Mammary epithelial cell (primary cell): ENCODE measurements at regions of chr2 and their contacts with region 1.

Region 1: DNA sequence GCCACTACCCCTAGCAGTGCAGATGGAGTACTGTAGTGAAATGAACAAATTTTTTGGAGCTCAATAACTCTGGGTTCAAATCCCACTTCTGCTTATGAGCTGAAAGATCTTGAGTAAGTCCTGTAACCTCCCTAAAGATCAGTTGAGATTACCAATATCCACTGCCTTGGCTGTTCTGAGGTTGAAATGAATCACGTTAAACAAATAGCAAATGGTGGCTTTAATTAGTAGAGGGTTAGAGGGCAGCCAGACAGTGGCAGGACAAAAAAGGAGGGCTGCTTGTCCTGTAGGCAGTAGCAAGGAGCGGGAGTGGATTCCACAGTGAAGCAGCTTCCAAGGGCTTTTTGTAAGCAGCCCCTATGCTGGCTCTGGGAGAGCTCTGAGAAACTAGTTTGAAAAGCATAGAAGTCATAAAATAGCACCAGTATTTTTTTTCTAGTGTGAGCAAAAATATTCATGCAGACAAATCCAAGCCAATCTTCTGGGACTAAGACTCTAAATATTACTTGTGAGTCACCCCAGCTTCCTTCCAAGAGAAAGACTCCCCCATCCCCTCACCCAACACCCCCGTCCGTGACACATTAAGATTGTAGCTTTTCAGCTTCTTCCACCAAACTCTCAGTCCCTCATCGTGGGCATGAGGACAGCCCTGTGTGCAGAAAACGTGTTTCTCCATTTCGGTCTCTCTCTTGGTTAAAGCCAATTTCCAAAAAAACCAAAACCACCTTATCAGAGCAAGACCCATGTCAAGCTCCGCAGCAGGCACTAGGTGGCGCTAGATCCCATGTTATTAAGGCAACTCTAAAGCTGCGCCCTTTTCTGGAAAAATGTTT is 123.5 kb upstream of the LGALSL start:
- DNase-seq: peak; percentile 55
- H3K4me3 ChIP-seq: peak overlapping the region in 1 of 3 experiments; percentile 31
- H3K27ac ChIP-seq: no peak overlapping the region
- H3K4me1 ChIP-seq: peaks cover 10% of the 10 kb centered on the region
- H3K27me3 ChIP-seq: no peaks in the 10 kb centered on the region
- CTCF ChIP-seq: peak; percentile 86 to 92

Region 2: GRCh38 chr2:64052468-64053241 is 277.8 kb before region 1 on chr2:
- CTCF ChIA-PET with region 1: interaction called, 4 read pairs
- dilution Hi-C with region 1: no loop called
- in situ Hi-C with region 1: no loop called
- intact Hi-C with region 1: loop called (anchors 1 kb)
- DNase-seq: peak; percentile 23
- H3K4me3 ChIP-seq: no peak overlapping the region
- H3K27ac ChIP-seq: no peak overlapping the region
- H3K4me1 ChIP-seq: peaks cover 33% of the 10 kb centered on the region
- H3K27me3 ChIP-seq: no peaks in the 10 kb centered on the region
- CTCF ChIP-seq: no peak

Region 3: GRCh38 chr2:64388669-64389068 is 58.2 kb after region 1 on chr2:
- CTCF ChIA-PET with region 1: no interaction called
- dilution Hi-C with region 1: no loop called
- in situ Hi-C with region 1: no loop called
- intact Hi-C with region 1: no loop called
- DNase-seq: no peak
- H3K4me3 ChIP-seq: no peak overlapping the region
- H3K27ac ChIP-seq: no peak overlapping the region
- H3K4me1 ChIP-seq: no peaks in the 10 kb centered on the region
- H3K27me3 ChIP-seq: no peaks in the 10 kb centered on the region
- CTCF ChIP-seq: no peak

Region 4: GRCh38 chr2:64414736-64415435 is 84.4 kb after region 1 on chr2:
- CTCF ChIA-PET with region 1: no interaction called
- dilution Hi-C with region 1: loop called (anchors 5 kb)
- in situ Hi-C with region 1: no loop called
- intact Hi-C with region 1: no loop called
- DNase-seq: no peak
- H3K4me3 ChIP-seq: no peak overlapping the region
- H3K27ac ChIP-seq: no peak overlapping the region
- H3K4me1 ChIP-seq: no peaks in the 10 kb centered on the region
- H3K27me3 ChIP-seq: no peaks in the 10 kb centered on the region
- CTCF ChIP-seq: no peak

Region 5: DNA sequence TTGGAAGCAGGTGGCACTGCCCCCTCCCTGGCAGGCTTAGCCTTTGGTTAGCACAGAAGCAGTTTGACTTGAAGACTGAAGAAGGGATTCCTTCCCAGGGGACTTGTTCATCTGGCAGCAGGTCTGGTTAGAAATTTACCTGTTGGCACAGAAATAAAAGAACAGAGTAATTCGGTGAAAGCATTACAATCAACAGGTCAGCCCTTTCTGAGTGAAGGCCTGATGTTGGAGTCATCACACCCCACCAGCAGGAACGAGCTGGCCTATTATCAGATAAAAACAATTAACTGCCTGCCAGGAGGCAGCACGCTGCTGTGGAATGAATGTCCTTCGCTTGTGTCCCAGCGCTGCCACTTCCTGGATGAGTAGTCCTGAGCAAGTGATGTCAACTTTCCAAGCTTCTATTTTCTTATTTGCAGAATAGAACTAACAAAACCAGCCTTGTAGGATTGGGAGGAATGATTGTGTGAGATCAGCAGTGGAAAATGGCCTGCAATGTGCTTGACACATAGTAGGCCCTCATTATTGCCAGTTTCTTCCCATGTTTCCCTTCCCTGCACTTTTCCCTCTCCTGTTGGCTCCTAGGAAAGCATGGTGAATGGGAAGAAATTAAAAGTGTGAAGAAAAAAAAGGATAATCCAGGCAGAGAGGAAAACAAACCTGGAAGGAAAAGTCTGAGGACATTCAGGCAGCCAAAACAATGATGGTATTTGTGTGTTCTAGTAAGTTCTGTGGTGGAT is 152.4 kb after region 1 on chr2:
- CTCF ChIA-PET with region 1: interaction called, 12 read pairs
- dilution Hi-C with region 1: loop called (anchors 5 kb)
- in situ Hi-C with region 1: loop called (anchors 5 kb)
- intact Hi-C with region 1: loop called (anchors 1 kb)
- DNase-seq: peak; percentile 75
- H3K4me3 ChIP-seq: no peak overlapping the region
- H3K27ac ChIP-seq: peak overlapping the region; percentile 11
- H3K4me1 ChIP-seq: peaks cover 40% of the 10 kb centered on the region
- H3K27me3 ChIP-seq: no peaks in the 10 kb centered on the region
- CTCF ChIP-seq: peak in 1 of 2 donors; percentile 9

Region 6: DNA sequence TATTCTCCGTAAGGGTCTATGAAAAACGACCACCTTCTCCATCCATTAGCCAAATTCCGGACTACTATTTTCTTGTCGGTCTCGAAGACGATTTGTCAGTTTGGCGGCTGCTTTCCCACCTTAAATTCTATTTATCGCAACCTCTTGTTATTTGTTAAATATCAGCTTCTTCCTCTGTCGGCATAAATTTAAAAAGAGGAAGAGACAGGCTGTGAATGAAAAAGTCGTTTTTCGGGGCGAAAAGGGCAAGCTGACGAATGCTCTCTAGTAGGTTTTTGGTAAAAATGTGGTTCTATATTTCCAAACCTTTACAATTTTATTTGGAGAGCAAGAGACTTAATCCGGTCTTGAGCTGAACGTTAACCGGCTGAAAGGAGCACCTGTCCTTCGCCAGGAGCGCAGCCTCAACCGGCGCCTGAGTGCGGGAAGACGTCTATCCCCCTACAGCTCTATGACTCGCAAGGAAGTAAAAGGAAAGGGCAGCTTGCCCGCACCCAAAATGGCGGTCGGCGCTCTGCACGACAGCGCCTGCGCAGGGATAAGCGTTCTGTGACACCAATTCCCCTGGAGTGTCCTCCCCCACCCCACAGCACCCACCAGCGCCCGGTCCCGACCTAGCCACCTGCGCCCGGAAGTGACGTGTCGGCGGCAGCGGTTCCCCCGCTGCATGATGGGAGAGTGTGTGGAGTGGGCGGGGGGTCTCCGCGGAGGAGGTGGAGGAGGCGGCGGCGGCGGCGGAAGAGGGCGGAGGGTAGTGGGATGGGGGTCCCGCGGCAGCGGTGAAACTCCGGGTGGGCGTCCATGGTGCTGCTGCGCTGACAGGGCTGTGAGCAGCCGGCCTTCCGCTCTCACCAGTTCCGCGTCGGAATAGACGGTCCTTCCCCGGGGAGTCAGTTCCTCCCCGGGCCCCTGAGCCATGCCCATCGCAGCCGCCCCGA is 193.4 kb after region 1 on chr2 and contains the start of gene AFTPH:
- CTCF ChIA-PET with region 1: no interaction called
- dilution Hi-C with region 1: no loop called
- in situ Hi-C with region 1: no loop called
- intact Hi-C with region 1: loop called (anchors 1 kb)
- DNase-seq: peak; percentile 99
- H3K4me3 ChIP-seq: peak within 1 kb of the TSS; percentile 79 to 93 (median 83)
- H3K27ac ChIP-seq: peak within 1 kb of the TSS; percentile 83
- H3K4me1 ChIP-seq: peaks cover 3% of the 10 kb centered on the region
- H3K27me3 ChIP-seq: no peaks in the 10 kb centered on the region
- CTCF ChIP-seq: no peak
- total RNA-seq, gene AFTPH: 20.7 to 34.5 TPM

Region 7: DNA sequence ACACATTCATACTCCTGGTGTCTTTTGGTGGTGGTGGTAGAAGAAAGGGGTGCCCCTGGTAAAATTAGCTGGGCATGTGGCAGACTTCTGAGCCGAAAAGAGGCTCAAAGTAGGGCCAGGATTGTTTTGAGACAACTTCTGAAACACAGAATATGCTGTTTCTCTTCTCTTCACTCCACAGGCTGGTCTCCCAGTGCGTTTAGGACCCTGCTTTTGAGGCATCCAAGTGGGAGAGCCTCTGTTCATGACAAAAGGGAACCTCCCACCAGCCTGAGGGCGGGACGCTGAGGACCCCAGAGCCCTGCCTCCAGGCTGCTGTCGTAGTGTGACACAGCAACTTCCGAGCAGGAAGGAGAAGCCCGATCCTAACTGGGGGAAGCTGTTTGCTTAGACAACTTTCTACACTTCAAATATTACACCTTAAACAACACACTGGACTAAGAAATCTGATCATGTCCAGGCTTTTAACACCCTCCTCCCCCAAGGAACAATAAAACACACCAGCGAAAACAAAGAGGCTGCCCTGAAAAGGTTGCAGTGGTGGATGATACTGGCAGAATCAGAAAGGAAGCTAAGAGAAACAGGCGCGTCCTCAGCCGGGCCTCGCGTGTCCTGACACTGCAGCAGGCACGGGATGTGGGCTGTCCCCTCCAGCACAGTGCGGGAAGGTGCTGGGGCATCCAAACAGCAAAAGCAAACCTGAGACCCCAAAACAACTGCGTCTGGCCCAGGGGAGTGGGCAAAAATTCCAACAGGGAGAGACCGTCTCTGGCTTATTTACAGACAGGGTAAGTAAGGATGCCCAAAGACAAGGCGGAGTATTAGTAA is 313.9 kb after region 1 on chr2:
- CTCF ChIA-PET with region 1: interaction called, 5 read pairs
- dilution Hi-C with region 1: no loop called
- in situ Hi-C with region 1: no loop called
- intact Hi-C with region 1: loop called (anchors 10 kb)
- DNase-seq: peak; percentile 73
- H3K4me3 ChIP-seq: peak overlapping the region; percentile 44 to 52 (median 48)
- H3K27ac ChIP-seq: peak overlapping the region; percentile 97
- H3K4me1 ChIP-seq: peaks cover 70% of the 10 kb centered on the region
- H3K27me3 ChIP-seq: no peaks in the 10 kb centered on the region
- CTCF ChIP-seq: no peak

Region 8: DNA sequence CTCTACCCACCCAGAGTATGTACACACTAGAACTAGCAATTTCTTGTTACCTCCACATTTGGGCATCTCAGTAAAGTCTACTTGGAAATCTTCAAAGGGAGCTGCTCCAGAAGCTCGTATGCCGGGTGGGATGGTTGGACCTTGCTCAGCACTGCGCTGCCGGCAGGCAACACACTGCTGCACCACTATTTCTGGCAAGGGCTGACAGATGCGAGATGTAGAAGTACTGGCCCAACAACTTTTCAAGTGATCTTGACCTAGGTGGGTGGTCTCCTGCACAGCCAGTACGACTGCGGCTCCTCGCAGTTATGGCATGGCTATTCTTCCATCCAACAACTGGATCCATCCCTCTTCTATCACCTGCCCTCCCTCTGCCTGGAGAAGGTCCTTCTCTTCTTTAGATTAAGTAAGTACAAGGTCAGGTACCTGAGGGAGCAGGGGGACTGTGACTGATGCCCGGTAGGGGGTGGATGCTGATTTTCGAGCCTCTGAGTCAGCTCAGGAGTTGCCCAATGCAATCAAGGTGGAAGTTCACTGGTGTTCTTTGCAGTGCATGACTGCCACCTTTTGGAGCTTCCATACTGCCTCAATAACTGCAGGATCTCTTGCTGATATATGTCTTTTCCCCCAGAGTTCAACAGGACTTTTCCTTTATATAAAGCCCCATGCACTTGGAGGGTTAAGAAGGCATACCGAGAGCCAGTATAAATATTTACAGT is 558.3 kb after region 1 on chr2:
- CTCF ChIA-PET with region 1: interaction called, 4 read pairs
- dilution Hi-C with region 1: loop called (anchors 25 kb)
- in situ Hi-C with region 1: loop called in 1 of 2 experiments (anchors 10 kb)
- intact Hi-C with region 1: loop called (anchors 1 kb)
- DNase-seq: peak; percentile 80
- H3K4me3 ChIP-seq: no peak overlapping the region
- H3K27ac ChIP-seq: no peak overlapping the region
- H3K4me1 ChIP-seq: no peaks in the 10 kb centered on the region
- H3K27me3 ChIP-seq: no peaks in the 10 kb centered on the region
- CTCF ChIP-seq: peak; percentile 73 to 80